Transverse colon (tissue), 4 donors: ENCODE measurements at regions of chr9 and their contacts with region 1.

Region 1: GRCh38 chr9:96327694-96328352 is 25.8 kb upstream of the HSD17B3 start:
- DNase-seq: peak; percentile 27
- H3K4me3 ChIP-seq: no peak overlapping the region
- H3K27ac ChIP-seq: no peak overlapping the region
- H3K4me1 ChIP-seq: no peaks in the 10 kb centered on the region
- H3K27me3 ChIP-seq: no peaks in the 10 kb centered on the region
- CTCF ChIP-seq: peak; percentile 79 to 95 (median 90)
- EP300 ChIP-seq: no peak
- POLR2A ChIP-seq: no peak

Region 2: DNA sequence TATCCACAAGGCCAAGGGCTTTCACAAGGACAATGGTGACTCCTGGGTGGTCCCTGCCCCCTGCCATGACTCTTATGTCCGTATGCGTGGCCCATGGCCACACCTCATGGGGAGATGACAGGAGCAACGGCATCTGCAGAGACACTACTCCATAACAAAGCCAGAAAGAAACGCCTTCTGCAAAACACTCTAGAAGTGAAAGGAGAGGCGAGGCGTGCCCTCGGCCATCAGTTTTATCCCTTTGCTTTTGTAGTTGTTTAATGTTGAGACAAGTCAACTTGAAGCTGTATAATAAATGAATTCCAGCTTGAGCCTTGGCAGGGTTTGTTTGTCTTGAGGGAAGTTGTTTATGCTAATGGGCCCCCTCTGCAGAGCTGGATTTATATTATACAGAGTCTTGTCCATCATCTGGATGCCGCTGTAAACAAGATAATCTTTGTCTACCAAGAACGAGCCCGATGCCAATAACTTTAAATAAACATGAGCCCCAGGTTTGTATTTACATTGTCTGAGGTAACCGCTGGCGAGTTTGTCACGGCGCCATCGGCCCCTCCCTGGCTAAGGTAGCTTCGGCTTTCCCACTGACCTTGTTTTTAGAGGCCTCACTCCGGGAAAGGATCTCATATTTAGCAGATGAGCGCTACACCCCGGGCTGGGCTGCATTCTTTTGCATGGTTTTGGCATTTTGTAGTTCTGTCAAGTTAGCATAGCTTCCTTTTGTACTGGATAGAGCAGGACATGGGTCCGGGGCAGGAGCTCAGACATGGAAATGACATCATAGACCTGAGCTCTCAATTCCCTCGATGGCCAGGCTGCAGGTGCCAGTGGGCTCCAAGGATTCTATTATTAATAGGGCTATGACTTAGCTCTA is 287.0 kb before region 1 on chr9:
- in situ Hi-C with region 1: no loop called
- intact Hi-C with region 1: no loop called
- DNase-seq: no peak
- H3K4me3 ChIP-seq: no peak overlapping the region
- H3K27ac ChIP-seq: peak overlapping the region; percentile 32 to 63 (median 49)
- H3K4me1 ChIP-seq: peaks cover 10 to 11% (median 11%) of the 10 kb centered on the region in 4 donors
- H3K27me3 ChIP-seq: no peaks in the 10 kb centered on the region
- CTCF ChIP-seq: no peak
- EP300 ChIP-seq: no peak
- POLR2A ChIP-seq: no peak

Region 3: DNA sequence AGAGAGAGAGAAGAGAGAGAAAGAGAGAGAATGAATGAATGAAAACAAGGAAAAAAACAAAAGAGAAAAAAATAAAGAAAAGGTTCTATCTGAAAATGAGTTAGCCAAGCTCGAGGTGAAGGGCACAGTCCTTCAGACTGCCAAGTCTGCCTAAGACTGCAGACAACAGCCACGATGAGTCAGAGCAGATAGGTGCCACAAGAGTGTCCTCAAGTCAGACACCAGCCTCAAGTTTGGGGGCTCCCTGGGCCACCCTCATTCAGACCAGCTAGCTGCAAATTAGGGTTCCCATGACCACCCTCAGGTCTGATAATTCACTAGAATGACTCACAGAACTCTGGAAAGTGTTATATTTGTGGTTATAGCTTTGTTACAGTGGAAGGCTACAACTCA is 108.2 kb after region 1 on chr9:
- in situ Hi-C with region 1: loop called in 2 of 4 experiments (anchors 10 kb)
- intact Hi-C with region 1: no loop called
- DNase-seq: no peak
- H3K4me3 ChIP-seq: no peak overlapping the region
- H3K27ac ChIP-seq: no peak overlapping the region
- H3K4me1 ChIP-seq: no peaks in the 10 kb centered on the region
- H3K27me3 ChIP-seq: no peaks in the 10 kb centered on the region
- CTCF ChIP-seq: no peak
- EP300 ChIP-seq: no peak
- POLR2A ChIP-seq: no peak

Region 4: GRCh38 chr9:96654443-96655197 is 326.8 kb after region 1 on chr9:
- in situ Hi-C with region 1: loop called in 3 of 4 experiments (anchors 5 to 25 kb)
- intact Hi-C with region 1: no loop called
- DNase-seq: peak; percentile 81
- H3K4me3 ChIP-seq: peak overlapping the region; percentile 63 to 76 (median 65)
- H3K27ac ChIP-seq: peak overlapping the region; percentile 94 to 96 (median 96)
- H3K4me1 ChIP-seq: peaks cover 6 to 18% (median 10%) of the 10 kb centered on the region in 4 donors
- H3K27me3 ChIP-seq: no peaks in the 10 kb centered on the region
- CTCF ChIP-seq: peak in 1 of 5 experiments; percentile 14
- EP300 ChIP-seq: no peak
- POLR2A ChIP-seq: peak; percentile 38

Region 5: DNA sequence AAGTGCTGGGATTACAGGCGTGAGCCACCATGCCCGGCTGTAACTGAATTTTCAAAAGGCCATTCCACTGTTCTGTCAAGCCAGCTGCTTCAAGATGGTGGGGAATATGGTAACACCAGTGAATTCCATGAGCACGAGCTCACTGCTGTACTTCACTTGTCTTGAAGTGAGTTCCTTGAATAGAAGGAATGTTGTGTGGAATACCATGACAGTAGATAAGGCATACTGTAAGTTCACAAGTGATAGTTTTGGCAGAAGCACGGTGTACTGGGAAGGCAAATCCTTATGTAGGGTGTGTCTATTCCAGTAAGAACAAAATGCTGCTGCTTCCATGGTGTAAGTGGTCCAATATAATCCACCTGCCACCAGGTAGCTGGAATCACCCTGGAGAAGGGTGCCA is 333.9 kb after region 1 on chr9:
- in situ Hi-C with region 1: loop called in 3 of 4 experiments (anchors 5 to 25 kb)
- intact Hi-C with region 1: loop called (anchors 10 kb)
- DNase-seq: no peak
- H3K4me3 ChIP-seq: no peak overlapping the region
- H3K27ac ChIP-seq: no peak overlapping the region
- H3K4me1 ChIP-seq: peaks cover 0 to 2% (median 0%) of the 10 kb centered on the region in 4 donors
- H3K27me3 ChIP-seq: no peaks in the 10 kb centered on the region
- CTCF ChIP-seq: no peak
- EP300 ChIP-seq: no peak
- POLR2A ChIP-seq: no peak

Region 6: DNA sequence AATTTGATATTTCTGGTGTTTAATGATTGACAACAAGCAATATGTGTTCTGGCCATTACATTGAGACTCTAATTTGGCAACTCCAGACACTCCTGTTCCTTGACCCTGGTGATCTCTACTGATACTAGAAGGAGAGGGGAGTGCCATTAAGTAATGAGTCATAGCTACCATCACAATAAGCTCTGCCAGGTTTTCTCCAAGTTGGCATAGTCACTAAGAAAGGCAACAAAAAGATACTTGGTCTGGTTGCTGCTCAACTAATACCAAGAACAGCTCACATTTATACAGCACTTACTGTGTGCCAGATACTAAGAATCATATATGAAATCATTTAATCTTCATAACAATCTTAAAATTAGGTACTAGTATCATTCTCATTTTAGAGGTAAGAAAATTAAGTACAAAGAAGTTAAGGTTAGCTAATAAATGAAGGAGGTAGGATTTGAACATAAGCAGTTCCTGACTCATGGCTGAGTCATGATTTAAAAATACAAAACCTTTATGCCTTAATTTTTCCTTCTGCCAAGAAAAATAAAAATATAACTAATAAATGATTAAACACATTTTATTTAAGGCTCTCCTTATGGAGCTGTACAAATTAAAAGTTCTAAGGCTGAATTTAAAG is 347.2 kb after region 1 on chr9:
- in situ Hi-C with region 1: loop called in 3 of 4 experiments (anchors 10 to 25 kb)
- intact Hi-C with region 1: no loop called
- DNase-seq: no peak
- H3K4me3 ChIP-seq: no peak overlapping the region
- H3K27ac ChIP-seq: no peak overlapping the region
- H3K4me1 ChIP-seq: no peaks in the 10 kb centered on the region
- H3K27me3 ChIP-seq: no peaks in the 10 kb centered on the region
- CTCF ChIP-seq: no peak
- EP300 ChIP-seq: no peak
- POLR2A ChIP-seq: no peak

Region 7: GRCh38 chr9:97721396-97721795 is 1393.6 kb after region 1 on chr9:
- in situ Hi-C with region 1: no loop called
- intact Hi-C with region 1: no loop called
- DNase-seq: no peak
- H3K4me3 ChIP-seq: no peak overlapping the region
- H3K27ac ChIP-seq: no peak overlapping the region
- H3K4me1 ChIP-seq: no peaks in the 10 kb centered on the region
- H3K27me3 ChIP-seq: peaks cover 16% of the 10 kb centered on the region
- CTCF ChIP-seq: no peak
- EP300 ChIP-seq: no peak
- POLR2A ChIP-seq: no peak